Esophagus muscularis mucosa (tissue), 4 donors: ENCODE measurements at regions of chr1 and their contacts with region 1.

Region 1: DNA sequence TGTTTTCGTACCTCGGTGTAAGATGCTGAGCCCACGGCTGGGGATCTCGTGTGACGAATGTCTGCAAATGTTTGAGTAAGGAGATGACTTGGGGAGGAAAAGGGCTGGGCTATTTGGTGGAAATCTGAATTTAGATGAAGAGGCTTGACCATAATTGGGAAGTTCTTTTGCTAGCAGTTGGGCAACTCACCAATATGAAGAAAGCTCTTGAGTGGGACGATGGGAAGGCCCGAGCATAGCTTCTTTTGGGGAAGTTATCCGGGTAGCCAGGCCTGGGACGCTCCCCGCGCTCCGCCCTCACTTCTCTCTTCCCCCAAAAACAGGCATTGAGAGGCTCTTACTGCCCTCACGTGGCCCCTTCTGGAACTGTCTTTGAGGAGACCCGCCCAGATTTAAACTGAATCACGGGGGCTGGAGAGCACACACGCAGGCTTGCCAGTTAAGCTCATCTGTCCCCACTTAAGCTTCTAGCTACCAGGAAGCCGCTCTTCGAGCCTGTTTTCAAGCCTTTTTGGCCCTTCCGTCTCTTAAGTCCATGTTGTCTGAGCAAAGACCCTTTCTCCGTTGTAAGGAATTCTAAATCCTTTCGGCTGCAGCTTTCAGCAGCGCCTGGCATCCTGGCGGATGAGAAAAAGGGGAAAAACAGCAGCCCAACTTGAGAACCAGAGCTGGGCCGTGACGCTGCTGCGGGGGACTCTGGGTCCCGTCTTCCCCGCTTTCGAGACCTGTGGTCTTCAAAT is 93.1 kb downstream of the NID1 start:
- DNase-seq: peak; percentile 98
- H3K4me3 ChIP-seq: peak overlapping the region; percentile 41 to 56 (median 52)
- H3K27ac ChIP-seq: peak overlapping the region; percentile 86 to 95 (median 92)
- H3K4me1 ChIP-seq: peaks cover 15 to 22% (median 21%) of the 10 kb centered on the region in 4 donors
- H3K27me3 ChIP-seq: no peaks in the 10 kb centered on the region
- CTCF ChIP-seq: peak; percentile 85 to 94 (median 87)
- EP300 ChIP-seq: no peak
- POLR2A ChIP-seq: no peak

Region 2: DNA sequence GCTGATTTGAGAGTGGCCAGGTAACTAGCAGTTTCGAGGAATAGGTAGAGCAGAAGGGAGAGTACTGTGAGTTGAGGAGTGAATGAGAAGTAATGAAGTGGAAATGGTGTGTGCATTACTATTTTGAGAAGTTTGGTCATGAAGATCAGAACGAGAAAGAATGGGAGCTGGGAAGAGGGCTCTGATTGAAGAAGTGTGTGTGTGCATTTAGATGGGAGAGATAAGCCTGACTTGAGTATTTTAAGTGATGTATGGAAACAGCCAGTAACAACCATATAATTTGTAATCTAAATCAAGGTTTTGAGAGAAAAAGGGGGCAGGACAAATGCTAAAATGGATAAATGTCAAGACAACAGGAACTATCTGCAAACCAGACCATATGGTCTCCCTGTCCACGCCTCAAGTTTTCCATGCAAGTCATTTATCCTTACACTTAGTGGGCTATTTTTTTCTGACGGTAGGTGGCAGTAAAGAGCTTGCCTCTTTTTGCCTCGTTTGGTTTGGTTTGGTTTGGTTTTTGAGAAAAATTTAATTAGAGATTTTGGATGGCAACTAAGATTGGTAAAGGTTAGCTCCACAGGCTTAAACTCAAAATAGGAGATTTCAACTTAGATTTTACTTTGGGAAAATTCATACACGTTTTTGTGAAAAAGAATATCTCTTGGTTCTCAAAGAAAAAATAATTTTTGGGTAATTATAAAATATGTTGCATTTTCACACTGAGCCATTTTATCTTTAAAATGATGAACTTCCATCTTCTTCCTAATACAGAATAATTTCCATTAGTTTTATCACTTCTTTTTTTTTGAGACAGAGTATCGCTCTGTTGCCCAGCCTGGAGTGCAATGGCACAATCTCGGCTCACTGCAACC is 458.0 kb before region 1 on chr1:
- intact Hi-C with region 1: loop called (anchors 5 kb)
- DNase-seq: no peak
- H3K4me3 ChIP-seq: no peak overlapping the region
- H3K27ac ChIP-seq: no peak overlapping the region
- H3K4me1 ChIP-seq: no peaks in the 10 kb centered on the region
- H3K27me3 ChIP-seq: no peaks in the 10 kb centered on the region
- CTCF ChIP-seq: peak; percentile 74 to 97 (median 84)
- EP300 ChIP-seq: no peak
- POLR2A ChIP-seq: no peak

Region 3: DNA sequence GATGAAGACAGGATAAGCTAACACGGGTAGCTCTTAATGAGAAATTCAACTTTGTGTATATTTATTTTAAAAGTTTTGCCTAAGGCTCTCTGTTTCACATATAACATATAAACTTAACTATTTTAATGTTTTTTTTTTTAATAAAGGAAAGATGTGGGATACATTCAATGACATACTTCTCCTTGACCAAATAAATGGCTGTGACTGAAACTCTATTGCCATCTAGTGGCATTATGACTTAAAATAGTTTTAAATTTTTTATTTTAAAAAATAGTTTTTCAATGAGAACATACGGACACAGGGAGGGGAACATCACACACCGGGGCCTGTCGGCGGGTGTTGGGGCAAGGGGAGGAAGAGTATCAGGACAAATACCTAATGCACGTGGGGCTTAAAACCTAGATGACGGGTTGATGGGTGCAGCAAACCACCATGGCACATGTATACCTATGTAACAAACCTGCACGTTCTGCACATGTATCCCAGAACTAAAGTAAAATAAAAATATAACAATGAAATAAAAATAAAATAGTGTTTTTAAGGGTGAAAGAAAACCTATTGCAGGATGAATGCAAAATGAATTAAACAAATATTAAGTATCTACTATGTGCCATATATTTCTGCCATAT is 188.5 kb before region 1 on chr1:
- intact Hi-C with region 1: loop called (anchors 10 kb)
- DNase-seq: no peak
- H3K4me3 ChIP-seq: no peak overlapping the region
- H3K27ac ChIP-seq: no peak overlapping the region
- H3K4me1 ChIP-seq: peaks cover 0 to 6% (median 2%) of the 10 kb centered on the region in 4 donors
- H3K27me3 ChIP-seq: no peaks in the 10 kb centered on the region
- CTCF ChIP-seq: peak in 2 of 3 experiments; percentile 49
- EP300 ChIP-seq: no peak
- POLR2A ChIP-seq: no peak

Region 4: DNA sequence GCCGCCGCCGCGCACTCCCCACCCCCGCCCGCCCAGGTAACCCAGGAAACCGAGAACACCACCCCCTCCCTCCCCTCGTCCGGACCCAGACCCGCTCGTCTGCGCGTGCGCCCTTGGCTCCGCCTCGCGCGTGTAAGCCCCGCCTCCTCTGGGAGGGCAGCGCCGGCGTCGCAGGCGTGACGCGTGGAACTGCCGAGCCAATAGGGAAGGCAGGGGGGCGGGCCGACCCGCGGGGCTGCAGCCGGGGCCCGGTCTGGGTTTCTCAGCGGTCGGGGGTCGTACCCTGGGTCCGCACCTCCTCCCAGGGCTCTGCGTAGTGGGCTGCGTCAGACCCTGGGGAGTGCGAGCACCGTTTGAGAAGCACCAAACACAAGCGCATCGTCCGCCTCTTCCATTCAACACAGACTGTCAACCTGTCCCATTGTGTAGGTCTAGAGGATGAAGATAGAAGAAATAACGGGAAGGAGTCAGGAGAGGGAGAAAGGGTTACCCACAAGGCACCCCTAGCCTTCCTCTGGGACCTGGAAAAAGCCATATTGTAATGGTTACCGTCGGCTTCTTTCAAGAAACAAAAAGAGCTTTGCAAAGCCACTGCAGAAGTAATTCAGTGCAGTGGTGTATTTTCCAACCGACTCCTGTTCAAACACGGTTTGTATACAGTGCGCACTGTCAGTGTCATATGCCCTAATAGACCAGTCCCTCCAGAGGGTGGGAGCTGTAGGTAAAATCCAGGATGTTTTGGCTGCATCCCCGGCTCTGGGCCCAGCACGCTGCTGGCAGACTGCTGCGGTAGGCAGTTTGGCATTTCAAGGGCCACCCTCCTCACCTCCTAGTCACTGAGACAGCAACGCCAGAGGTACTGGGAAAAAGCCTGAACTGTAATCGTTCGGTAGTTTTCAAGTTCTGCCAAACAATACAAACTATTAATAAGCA is 104.6 kb before region 1 on chr1:
- intact Hi-C with region 1: loop called (anchors 5 kb)
- DNase-seq: peak; percentile 98
- H3K4me3 ChIP-seq: peak overlapping the region; percentile 80 to 100 (median 90)
- H3K27ac ChIP-seq: peak overlapping the region; percentile 90 to 99 (median 96)
- H3K4me1 ChIP-seq: peaks cover 17 to 40% (median 36%) of the 10 kb centered on the region in 4 donors
- H3K27me3 ChIP-seq: no peaks in the 10 kb centered on the region
- CTCF ChIP-seq: no peak
- EP300 ChIP-seq: no peak
- POLR2A ChIP-seq: peak; percentile 64

Region 5: GRCh38 chr1:236064674-236065508 is 93.2 kb after region 1 on chr1 and contains the start of gene NID1:
- intact Hi-C with region 1: loop called (anchors 10 kb)
- DNase-seq: peak; percentile 96
- H3K4me3 ChIP-seq: peak within 1 kb of the TSS; percentile 63 to 90 (median 79)
- H3K27ac ChIP-seq: peak within 1 kb of the TSS; percentile 89 to 99 (median 96)
- H3K4me1 ChIP-seq: peaks cover 30 to 71% (median 64%) of the 10 kb centered on the region in 4 donors
- H3K27me3 ChIP-seq: peaks cover 0 to 4% (median 0%) of the 10 kb centered on the region in 4 donors
- CTCF ChIP-seq: peak; percentile 39 to 44 (median 43)
- EP300 ChIP-seq: peak; percentile 62
- POLR2A ChIP-seq: peak; percentile 69
- total RNA-seq, gene NID1: 187 to 390 (median 287) TPM